ENCODE measurements at regions of chr5 and their contacts with region 1.

Region 1: DNA sequence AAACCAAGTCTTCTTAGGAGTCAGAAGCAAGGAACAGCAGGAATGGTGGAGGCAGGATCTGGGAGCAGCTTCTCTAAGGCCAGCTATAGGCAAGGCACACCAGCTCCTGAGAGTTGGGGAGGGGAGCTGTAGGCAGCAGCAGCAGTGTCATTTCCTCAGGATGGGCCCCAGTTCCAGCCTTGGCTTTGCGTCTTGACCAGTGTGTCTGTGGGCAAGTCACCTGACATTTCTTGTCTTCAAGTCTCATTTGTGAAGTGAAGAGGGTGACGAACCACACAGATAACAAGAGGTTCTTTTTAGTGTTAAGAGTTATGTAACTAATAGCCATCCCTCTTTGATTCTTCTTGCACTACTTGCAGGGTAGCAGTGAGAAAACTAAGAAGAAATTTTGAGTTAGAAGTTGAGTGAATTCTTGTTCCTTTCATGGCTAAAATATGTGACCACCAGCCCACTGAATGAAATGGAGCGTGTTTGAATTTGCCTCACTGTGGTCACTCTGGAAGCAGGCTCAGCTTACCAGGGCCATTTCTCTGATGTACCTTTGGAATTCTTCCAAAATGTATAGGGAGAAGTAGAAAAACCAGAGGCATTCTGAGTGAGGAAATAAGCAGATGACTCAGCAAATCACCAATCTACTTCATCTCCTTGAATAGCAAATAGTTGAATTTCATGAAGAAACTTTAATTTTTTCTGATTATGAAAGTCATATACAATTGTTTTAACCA is 42.4 kb downstream of the RHOBTB3 start:
- DNase-seq: no peak
- H3K4me3 ChIP-seq: no peak overlapping the region
- H3K27ac ChIP-seq: peak overlapping the region in 2 of 8 donors; percentile 18 to 26
- H3K4me1 ChIP-seq: peaks cover 0 to 16% (median 1%) of the 10 kb centered on the region in 6 donors
- H3K27me3 ChIP-seq: no peaks in the 10 kb centered on the region
- CTCF ChIP-seq: no peak
- POLR2A ChIP-seq: no peak

Region 2: GRCh38 chr5:95664204-95664786 is 109.2 kb before region 1 on chr5:
- intact Hi-C with region 1: loop called (anchors 10 kb)
- DNase-seq: no peak
- H3K4me3 ChIP-seq: no peak overlapping the region
- H3K27ac ChIP-seq: no peak overlapping the region
- H3K4me1 ChIP-seq: peaks cover 0 to 18% (median 6%) of the 10 kb centered on the region in 6 donors
- H3K27me3 ChIP-seq: no peaks in the 10 kb centered on the region
- CTCF ChIP-seq: peak; percentile 39 to 78 (median 71)
- POLR2A ChIP-seq: no peak

Region 3: GRCh38 chr5:96187309-96188027 is 414.0 kb after region 1 on chr5:
- intact Hi-C with region 1: no loop called
- DNase-seq: no peak
- H3K4me3 ChIP-seq: no peak overlapping the region
- H3K27ac ChIP-seq: no peak overlapping the region
- H3K4me1 ChIP-seq: no peaks in the 10 kb centered on the region
- H3K27me3 ChIP-seq: no peaks in the 10 kb centered on the region
- CTCF ChIP-seq: no peak
- POLR2A ChIP-seq: no peak

Region 4: GRCh38 chr5:96344678-96345577 is 571.4 kb after region 1 on chr5:
- intact Hi-C with region 1: loop called (anchors 10 kb)
- DNase-seq: no peak
- H3K4me3 ChIP-seq: no peak overlapping the region
- H3K27ac ChIP-seq: no peak overlapping the region
- H3K4me1 ChIP-seq: peaks cover 0 to 14% (median 2%) of the 10 kb centered on the region in 6 donors
- H3K27me3 ChIP-seq: peaks cover 0 to 3% (median 0%) of the 10 kb centered on the region in 7 donors
- CTCF ChIP-seq: peak in 10 of 11 experiments; percentile 15 to 63 (median 46)
- POLR2A ChIP-seq: no peak

Measured in spleen (tissue), 13 donors.